Activated T-helper 1 cell treated with anti-CD3 and anti-CD28 coated beads, Interleukin-12 subunit alpha, Interleukin-12 subunit beta, Interleukin-2, Interleukin-4 antibody, amounts not matched to agents 30 ng/mL and 10 ng/mL and 1 ng/mL, durations not matched to agents 14 hours and 24 hours and 36 hours (primary cell): ENCODE measurements at regions of chr18 and their contacts with region 1.

Region 1: DNA sequence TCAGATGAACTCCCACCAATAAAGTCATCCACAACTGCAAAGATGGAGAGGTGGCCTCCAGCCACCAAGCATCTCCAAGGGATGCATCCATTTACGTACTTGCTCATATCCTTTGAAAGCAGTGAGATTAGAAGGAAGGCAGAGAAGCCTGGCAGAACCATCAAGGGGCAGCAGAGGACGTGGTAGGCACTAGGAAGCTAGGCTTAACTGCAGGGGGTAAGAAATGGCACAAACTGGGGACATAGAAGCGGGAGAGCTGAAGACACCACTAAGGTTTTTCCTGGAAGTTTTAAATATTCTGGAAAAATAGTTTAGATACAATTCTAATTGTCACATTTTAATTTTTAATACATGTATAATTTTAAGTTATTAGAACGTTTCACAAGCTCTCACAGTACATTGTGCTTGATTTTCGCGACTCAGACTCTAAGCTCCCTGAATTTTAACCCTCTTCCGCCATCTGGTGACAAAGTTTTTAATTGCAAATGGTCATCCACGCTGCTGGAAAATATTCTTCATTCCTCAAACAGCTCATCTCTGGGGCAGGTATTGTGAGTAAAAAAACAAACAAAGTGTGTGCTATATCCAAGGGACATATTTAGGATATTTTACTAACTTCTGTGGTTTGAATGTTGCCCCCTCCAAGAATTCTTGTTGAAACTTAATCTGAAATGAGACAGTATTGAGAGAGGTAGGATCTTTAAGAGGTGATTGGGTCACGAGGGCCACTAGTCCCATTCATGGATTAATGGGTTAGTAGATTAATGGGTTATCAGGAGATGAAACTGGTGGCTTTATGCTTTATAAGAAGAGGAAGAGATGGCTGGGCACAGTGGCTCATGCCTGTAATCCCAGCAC is 1.6 kb upstream of the PSTPIP2 start:
- DNase-seq: peak; percentile 47
- H3K4me3 Mint-ChIP-seq: peak overlapping the region; percentile 32
- H3K27ac Mint-ChIP-seq: peak overlapping the region; percentile 14
- H3K4me1 Mint-ChIP-seq: peaks cover 42% of the 10 kb centered on the region
- H3K27me3 Mint-ChIP-seq: peaks cover 3% of the 10 kb centered on the region

Region 2: DNA sequence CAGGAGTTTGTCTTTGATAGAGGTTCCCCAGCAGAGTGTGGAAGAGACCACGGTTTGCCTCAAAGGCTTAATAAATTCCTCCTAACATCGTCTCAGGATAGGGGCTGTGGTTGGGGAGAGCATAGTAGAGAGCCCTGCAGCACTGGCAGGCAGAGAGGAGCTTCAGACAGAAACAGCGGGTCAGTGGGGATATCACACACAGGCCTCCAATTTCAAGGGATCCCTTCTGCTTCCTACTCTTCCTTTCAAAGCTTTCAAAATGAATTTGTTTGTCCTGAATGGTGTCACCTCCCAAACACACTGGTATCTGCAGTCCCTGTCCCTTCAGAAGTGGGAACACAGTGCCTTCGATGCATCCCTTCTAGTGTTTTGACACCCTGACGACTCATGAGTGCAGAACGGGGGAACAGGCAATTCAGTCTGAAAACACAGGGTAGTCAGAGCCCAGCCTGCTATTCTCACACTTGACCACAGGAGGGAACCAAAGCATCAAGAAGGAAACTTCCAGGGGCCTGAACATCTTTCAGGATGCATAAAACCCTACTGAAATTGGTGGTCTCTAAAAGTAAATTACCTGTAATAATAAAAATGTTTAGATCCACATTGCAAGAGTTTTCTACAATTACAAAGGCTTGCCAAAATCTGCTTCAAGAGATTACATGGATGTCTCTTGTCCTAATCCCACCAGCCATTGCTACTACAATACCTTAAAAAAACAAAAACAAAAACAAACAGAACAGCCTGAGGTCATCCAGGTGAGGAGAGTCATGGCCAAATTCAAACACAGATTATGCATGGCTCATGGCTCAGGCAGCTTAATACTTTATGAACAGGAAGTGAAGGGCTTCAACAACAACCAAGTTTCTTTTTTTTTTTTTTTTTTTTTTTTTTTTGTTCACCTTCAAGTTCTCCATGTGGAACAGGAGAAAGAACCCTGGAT is 408.6 kb before region 1 on chr18:
- intact Hi-C with region 1: loop called (anchors 1 kb)
- DNase-seq: peak; percentile 44
- H3K4me3 Mint-ChIP-seq: no peak overlapping the region
- H3K27ac Mint-ChIP-seq: no peak overlapping the region
- H3K4me1 Mint-ChIP-seq: peaks cover 52% of the 10 kb centered on the region
- H3K27me3 Mint-ChIP-seq: peaks cover 12% of the 10 kb centered on the region

Region 3: DNA sequence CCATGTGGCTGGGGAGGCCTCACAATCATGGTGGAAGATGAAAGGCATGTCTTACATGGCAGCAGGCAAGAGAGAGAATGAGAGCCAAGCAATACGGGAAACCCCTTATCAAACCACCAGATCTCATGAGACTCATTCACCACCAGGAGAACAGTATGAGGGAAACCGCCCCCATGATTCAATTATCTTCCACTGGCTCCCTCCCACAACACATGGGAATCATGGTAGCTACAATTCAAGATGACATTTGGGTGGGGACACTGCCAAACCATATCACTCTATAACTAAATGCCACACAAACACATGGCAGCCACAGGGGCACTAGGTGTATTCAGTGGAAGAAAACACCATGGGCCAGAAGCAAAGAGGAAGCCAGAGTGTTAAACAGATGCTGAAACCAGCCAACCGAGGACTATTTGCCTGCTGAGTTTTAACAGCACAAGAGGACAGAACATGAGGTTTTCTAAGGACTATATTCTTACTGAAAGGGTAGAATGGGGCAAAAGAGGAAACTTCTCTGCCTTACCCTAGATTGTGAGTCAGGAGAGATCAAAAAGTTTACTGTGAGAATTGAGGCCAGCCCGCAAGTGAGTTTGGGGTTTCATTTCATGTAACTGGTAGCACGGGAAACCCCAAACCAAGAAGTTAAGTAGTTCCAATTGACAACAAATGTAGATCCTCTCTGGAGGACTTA is 199.1 kb before region 1 on chr18:
- intact Hi-C with region 1: loop called (anchors 2 kb)
- DNase-seq: peak; percentile 67
- H3K4me3 Mint-ChIP-seq: peak overlapping the region; percentile 11
- H3K27ac Mint-ChIP-seq: peak overlapping the region; percentile 90
- H3K4me1 Mint-ChIP-seq: peaks cover 32% of the 10 kb centered on the region
- H3K27me3 Mint-ChIP-seq: peaks cover 2% of the 10 kb centered on the region

Region 4: DNA sequence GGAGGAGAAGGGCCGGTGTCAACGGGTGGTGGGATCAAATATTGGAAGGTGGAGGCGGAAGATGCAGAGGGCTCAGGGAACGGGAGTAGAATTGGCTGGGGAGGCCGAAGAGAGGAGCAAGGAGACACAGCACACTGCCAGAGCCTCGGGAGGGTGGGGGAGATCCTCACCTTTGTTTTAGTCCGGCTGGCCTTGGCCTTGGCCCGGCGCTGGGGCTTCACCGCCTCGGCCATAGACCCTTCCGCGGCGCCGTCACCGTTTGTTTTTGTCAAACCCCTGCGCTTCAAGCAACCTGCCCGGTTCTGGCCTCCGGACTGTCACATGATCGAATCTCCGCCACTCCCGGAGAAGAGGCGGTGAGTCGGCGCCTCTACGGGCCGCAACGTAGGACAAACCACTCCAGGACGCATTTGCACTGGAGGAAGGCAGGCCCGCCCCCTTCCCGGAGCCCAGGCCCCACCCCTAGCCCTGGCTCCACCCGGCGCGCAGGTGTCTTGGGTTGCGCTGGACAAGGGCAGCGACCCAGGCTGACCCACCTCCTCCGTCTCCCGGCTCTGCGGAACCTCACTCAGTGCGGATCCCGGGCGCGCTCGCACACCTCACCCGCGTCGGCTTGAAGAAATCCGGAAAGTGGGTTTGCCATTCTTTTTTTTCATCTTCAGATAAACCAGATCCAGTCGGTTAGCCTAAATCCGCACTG is 106.5 kb before region 1 on chr18 and contains the start of gene EPG5:
- intact Hi-C with region 1: loop called (anchors 1 kb)
- DNase-seq: peak; percentile 93
- H3K4me3 Mint-ChIP-seq: peak within 1 kb of the TSS; percentile 97
- H3K27ac Mint-ChIP-seq: peak within 1 kb of the TSS; percentile 91
- H3K4me1 Mint-ChIP-seq: peaks cover 38% of the 10 kb centered on the region
- H3K27me3 Mint-ChIP-seq: peaks cover 2% of the 10 kb centered on the region
- total RNA-seq, gene EPG5: 14.3 and 14.6 TPM in 2 replicates

Region 5: GRCh38 chr18:46013484-46014189 is 60.1 kb before region 1 on chr18:
- intact Hi-C with region 1: loop called (anchors 1 kb)
- DNase-seq: no peak
- H3K4me3 Mint-ChIP-seq: no peak overlapping the region
- H3K27ac Mint-ChIP-seq: peak overlapping the region; percentile 3
- H3K4me1 Mint-ChIP-seq: peaks cover 11% of the 10 kb centered on the region
- H3K27me3 Mint-ChIP-seq: peaks cover 9% of the 10 kb centered on the region

Region 6: GRCh38 chr18:46104128-46104911 is 30.6 kb after region 1 on chr18 and contains the start of gene HAUS1:
- intact Hi-C with region 1: loop called (anchors 2 kb)
- DNase-seq: peak; percentile 79
- H3K4me3 Mint-ChIP-seq: peak within 1 kb of the TSS; percentile 96
- H3K27ac Mint-ChIP-seq: peak within 1 kb of the TSS; percentile 90
- H3K4me1 Mint-ChIP-seq: peaks cover 21% of the 10 kb centered on the region
- H3K27me3 Mint-ChIP-seq: peaks cover 2% of the 10 kb centered on the region
- total RNA-seq, gene HAUS1: 41.8 and 42.1 TPM in 2 replicates